Breast epithelium (tissue), 4 donors: ENCODE measurements at regions of chr12 and their contacts with region 1.

Region 1: GRCh38 chr12:22321638-22322037 is 12.9 kb downstream of the ST8SIA1 start:
- DNase-seq: no peak
- H3K4me3 ChIP-seq: no peak overlapping the region
- H3K27ac ChIP-seq: peak overlapping the region in 1 of 2 donors; percentile 25
- H3K4me1 ChIP-seq: no peaks in the 10 kb centered on the region
- H3K27me3 ChIP-seq: no peaks in the 10 kb centered on the region
- CTCF ChIP-seq: no peak
- POLR2A ChIP-seq: no peak

Region 2: DNA sequence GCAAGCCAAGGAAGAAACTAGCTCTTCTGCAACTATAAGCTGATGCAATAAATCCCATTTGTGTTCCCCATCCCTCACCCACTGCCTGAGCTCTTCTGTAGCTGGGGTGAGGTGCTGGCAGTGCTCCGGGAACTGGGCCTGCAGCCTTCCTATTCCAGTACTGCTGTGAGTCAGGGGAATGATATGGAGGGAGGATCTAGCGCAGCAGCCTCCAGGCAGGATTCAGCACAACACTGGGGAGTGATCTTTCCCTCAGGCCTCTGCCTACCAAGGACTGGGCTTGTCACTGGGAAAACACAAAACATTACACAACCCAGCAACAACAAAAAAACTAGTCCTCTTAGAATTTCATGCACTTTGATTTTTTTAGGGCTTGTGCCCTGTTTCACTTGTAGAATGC is 45.8 kb before region 1 on chr12:
- intact Hi-C with region 1: loop called (anchors 1 kb)
- DNase-seq: peak; percentile 87 to 97
- H3K4me3 ChIP-seq: peak overlapping the region in 1 of 3 donors; percentile 35
- H3K27ac ChIP-seq: peak overlapping the region; percentile 88 to 95
- H3K4me1 ChIP-seq: peaks cover 11 to 17% of the 10 kb centered on the region in 2 donors
- H3K27me3 ChIP-seq: no peaks in the 10 kb centered on the region
- CTCF ChIP-seq: no peak
- POLR2A ChIP-seq: no peak

Region 3: DNA sequence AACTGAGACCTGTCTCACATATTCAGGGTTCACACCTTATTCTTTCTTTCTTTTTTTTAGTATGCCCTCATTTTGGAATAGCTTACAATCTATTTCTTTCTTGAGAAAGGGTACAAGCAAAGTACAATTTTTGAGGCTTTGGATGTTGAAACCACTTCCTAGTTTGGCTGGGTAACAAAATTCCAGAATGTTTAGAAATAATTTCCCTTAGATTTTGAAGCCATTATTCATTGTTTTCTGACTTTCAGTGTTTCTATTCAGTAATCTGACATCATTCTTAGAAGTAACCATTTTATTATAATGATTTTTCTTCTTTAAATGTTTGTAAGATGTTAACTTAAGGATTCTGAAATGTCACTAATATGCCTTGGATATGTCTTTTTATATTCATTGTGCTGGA is 15.3 kb before region 1 on chr12:
- intact Hi-C with region 1: no loop called
- DNase-seq: no peak
- H3K4me3 ChIP-seq: no peak overlapping the region
- H3K27ac ChIP-seq: peak overlapping the region in 1 of 2 donors; percentile 38
- H3K4me1 ChIP-seq: peaks cover 0 to 3% of the 10 kb centered on the region in 2 donors
- H3K27me3 ChIP-seq: no peaks in the 10 kb centered on the region
- CTCF ChIP-seq: no peak
- POLR2A ChIP-seq: no peak